Activated CD4-positive, alpha-beta T cell treated with anti-CD3 and anti-CD28 coated beads, Interleukin-2, amount 10 ng/mL, durations not matched to agents 24 days and 14 days (primary cell): ENCODE measurements at regions of chr13 and their contacts with region 1.

Region 1: GRCh38 chr13:94351292-94351990 is 128.0 kb downstream of the DCT start:
- DNase-seq: no peak
- H3K4me3 Mint-ChIP-seq: no peak overlapping the region
- H3K27ac Mint-ChIP-seq: peak overlapping the region; percentile 5
- H3K4me1 Mint-ChIP-seq: peaks cover 19% of the 10 kb centered on the region
- H3K27me3 Mint-ChIP-seq: peaks cover 4% of the 10 kb centered on the region

Region 2: DNA sequence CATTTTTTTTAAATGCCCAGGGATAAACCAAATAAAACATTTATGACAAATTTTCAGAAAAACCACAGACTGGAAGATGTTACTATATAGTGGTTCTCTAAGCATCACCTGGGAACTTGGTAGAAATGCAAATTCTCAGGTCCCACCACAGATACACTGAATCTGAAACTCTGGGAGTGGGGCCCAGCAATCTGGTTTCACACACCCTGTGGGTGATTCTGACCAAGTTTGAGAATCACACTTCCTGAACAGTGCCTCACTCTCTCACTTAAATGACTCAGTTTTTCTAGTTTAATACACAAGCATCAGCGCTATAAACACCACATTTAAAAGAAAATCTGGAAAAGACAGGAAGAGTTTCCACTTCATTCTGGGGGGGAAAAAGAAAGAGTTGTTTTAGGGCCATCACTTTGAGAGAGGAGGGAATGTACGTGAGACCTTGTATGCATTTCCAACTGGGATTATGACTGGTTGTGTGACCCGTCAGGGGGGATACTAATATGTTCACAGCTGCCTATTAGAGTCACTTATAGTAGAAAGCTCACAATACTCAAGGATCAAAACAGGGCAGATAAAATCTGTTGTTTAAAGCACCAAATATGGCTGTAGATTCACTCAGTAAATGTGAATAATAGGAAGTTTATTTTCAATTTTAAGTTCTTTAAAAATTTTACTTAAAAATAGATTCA is 557.1 kb before region 1 on chr13:
- intact Hi-C with region 1: loop called (anchors 2 kb)
- DNase-seq: peak; percentile 63
- H3K4me3 Mint-ChIP-seq: no peak overlapping the region
- H3K27ac Mint-ChIP-seq: peak overlapping the region; percentile 1
- H3K4me1 Mint-ChIP-seq: peaks cover 8% of the 10 kb centered on the region
- H3K27me3 Mint-ChIP-seq: peaks cover 14% of the 10 kb centered on the region

Region 3: DNA sequence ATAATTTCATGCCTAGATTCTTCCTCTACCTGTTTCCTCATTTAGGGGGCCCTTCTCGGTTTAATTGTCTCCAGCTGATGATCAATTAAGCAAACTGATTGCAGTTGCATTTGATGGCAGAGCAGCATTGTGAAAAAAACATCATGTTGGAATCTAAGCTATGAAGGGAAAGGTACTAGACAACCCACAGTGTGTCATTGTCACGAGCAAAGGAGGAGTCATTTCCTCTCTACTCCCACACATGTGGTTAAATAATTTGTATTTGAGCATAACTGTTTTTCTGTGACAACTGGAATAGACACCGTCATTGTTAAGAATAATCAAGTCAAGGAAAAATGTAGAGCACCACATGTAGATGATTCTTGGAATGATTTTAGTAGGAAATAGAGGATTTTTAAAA is 112.3 kb before region 1 on chr13:
- intact Hi-C with region 1: loop called (anchors 2 kb)
- DNase-seq: peak; percentile 60
- H3K4me3 Mint-ChIP-seq: no peak overlapping the region
- H3K27ac Mint-ChIP-seq: no peak overlapping the region
- H3K4me1 Mint-ChIP-seq: peaks cover 29% of the 10 kb centered on the region
- H3K27me3 Mint-ChIP-seq: peaks cover under 1% of the 10 kb centered on the region

Region 4: DNA sequence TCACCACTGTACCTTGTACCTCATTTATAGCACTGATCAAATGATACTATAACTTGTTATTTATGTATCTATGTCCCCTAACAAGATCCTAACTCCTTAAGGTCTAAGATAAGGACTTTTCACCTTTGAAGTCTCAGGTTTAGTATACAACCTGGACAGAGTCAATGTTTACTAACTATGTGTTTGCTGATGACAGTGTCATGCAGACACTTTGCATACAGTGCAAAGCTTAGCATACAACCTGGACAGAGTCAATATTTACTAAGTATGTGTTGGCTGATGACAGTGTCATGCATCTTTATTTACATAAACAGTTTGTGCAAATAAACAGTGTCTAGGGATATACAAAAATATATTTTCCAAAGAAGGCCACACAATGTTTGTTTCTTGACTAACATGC is 93.3 kb after region 1 on chr13:
- intact Hi-C with region 1: no loop called
- DNase-seq: no peak
- H3K4me3 Mint-ChIP-seq: no peak overlapping the region
- H3K27ac Mint-ChIP-seq: no peak overlapping the region
- H3K4me1 Mint-ChIP-seq: no peaks in the 10 kb centered on the region
- H3K27me3 Mint-ChIP-seq: no peaks in the 10 kb centered on the region

Region 5: DNA sequence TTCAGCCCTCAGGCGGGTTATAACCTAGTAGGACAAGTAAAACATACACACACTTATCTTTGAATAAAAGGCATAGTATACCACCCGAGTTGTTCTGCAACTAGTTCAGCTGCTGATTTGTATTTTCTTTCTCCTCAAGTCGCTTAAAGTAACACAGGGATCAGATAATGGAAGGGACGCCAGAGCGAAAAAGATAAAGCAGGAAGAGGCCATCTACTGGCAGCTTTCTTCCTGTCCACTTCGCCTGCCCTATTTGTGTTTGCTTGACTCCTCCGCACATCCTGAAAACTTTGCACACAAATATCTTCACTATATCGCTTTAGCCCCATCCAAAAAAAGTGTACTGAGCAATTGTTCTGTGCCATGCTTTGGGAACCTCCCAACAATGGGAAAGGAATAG is 598.9 kb after region 1 on chr13:
- intact Hi-C with region 1: no loop called
- DNase-seq: no peak
- H3K4me3 Mint-ChIP-seq: no peak overlapping the region
- H3K27ac Mint-ChIP-seq: no peak overlapping the region
- H3K4me1 Mint-ChIP-seq: no peaks in the 10 kb centered on the region
- H3K27me3 Mint-ChIP-seq: peaks cover 2% of the 10 kb centered on the region